Activated CD4-positive, alpha-beta memory T cell treated with anti-CD3 and anti-CD28 coated beads, Interleukin-2, amount 10 ng/mL, durations not matched to agents 7 days and 5 days (primary cell): ENCODE measurements at regions of chr17 and their contacts with region 1.

Region 1: DNA sequence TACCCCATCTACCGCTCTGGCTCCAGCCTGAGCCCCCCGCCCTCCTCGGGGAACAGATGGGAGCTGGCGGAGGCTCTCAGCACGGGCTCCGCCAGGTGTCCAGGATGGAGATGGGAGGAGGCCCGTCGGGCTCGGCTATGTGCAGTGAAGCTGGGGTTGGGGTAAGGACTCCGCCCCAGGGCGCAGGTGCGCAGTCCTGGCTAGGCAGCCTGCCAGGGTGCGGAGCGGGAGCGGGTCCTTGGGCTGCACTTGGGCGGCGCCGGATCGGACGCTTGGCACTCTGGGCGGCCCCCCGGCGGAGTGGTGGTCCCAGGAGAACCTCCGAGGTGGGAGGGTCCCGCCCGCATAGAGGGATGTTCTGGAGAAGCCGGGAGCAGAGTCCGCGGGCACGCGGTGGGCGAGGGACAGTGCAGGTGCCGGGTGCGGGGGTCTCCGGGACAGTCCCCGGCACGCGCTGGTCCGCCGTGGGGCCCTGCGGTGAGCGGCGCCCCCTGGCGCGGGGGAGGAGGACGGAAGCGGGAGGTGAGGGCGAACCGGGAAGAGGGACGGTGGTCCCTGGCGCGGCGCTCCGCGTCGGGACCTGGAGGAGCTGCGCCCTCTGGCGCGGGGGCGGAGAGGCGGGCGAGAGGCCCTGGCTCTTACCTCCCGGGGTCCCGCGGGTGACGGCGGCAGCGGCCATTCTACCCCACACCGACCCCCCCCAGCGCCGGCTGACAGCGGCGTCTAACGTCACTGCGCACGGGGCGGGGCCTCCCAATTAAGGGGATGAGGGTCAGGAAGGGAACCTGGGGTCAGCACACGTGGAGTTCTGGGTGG is at the start of gene CAMTA2:
- DNase-seq: peak; percentile 89
- H3K4me3 Mint-ChIP-seq: peak within 1 kb of the TSS; percentile 88
- H3K27ac Mint-ChIP-seq: peak within 1 kb of the TSS; percentile 88
- H3K4me1 Mint-ChIP-seq: peaks cover 40% of the 10 kb centered on the region
- H3K27me3 Mint-ChIP-seq: no peaks in the 10 kb centered on the region
- total RNA-seq, gene CAMTA2: 73.2 to 80.1 TPM

Region 2: GRCh38 chr17:4928881-4929280 is 58.3 kb before region 1 on chr17:
- CTCF ChIA-PET with region 1: no interaction called
- POLR2A ChIA-PET with region 1: no interaction called
- DNase-seq: no peak
- H3K4me3 Mint-ChIP-seq: no peak overlapping the region
- H3K27ac Mint-ChIP-seq: no peak overlapping the region
- H3K4me1 Mint-ChIP-seq: peaks cover 10% of the 10 kb centered on the region
- H3K27me3 Mint-ChIP-seq: no peaks in the 10 kb centered on the region

Region 3: DNA sequence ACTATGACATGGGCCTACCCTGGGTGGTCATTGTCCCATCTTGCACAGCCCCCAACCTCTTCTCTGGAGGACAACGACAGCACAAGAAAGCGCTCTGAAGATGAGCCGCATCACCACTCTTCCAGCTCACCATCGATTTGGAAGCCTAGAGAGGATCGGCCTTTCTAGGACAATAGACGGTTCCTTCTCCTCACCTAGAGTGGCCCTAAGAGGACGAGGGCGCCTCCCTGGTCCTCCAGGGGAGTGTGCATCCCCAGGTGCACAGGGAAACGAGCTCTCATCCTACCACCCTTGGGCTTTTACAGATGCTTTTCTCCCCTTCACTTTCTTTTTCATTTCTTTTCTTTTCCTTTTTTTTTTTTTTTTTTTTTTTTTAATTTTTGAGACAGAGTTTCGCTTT is 68.4 kb after region 1 on chr17:
- CTCF ChIA-PET with region 1: interaction called, 16 read pairs
- POLR2A ChIA-PET with region 1: no interaction called
- DNase-seq: no peak
- H3K4me3 Mint-ChIP-seq: no peak overlapping the region
- H3K27ac Mint-ChIP-seq: no peak overlapping the region
- H3K4me1 Mint-ChIP-seq: peaks cover 2% of the 10 kb centered on the region
- H3K27me3 Mint-ChIP-seq: no peaks in the 10 kb centered on the region